ENCODE measurements at regions of chr11 and their contacts with region 1.

Region 1: GRCh38 chr11:20303343-20303965 is 60.1 kb upstream of the HTATIP2 start:
- DNase-seq: no peak
- H3K4me3 ChIP-seq: no peak overlapping the region
- H3K27ac ChIP-seq: no peak overlapping the region
- H3K27me3 ChIP-seq: no peaks in the 10 kb centered on the region
- CTCF ChIP-seq: no peak

Region 2: DNA sequence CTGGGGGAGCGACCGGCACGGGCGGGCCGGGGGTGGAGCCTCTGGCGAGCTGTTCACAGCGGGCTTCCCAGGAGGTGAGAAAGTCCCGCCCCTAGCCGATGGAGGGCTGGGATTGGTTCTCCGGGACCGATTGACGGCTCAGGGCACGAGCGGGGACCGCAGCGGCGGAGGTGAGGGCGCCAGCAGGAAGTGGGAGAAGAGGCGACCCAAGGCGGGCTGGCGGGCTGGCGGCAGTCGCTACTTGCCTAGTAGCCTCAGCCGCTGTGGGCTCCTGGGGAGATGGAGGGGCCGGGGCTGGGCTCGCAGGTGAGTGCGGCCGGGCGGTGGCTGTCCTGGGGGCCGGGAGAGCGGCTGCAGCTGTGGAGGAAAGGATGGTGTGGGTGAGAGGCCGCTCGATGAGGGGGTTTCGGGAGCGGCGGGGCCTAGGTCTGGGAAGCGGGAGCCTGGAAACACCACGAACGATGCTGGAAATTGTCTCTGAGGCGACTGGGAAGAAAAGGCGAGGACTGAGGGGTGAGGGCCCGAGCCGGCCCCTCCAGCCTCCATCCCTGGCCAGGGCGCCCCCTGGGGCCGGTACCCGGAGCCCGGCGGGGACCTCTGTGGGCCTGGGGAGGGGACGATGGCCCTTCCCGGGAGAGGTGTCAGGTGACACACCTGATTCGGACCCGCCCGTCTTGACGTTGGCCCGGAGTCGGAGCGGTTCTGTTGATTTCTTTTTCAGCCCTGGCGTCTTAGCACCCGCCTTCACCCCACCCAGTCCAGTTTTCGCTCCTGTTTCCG is 1186.3 kb before region 1 on chr11 and contains the start of gene ZDHHC13:
- CTCF ChIA-PET with region 1: no interaction called
- POLR2A ChIA-PET with region 1: interaction called, 11 read pairs
- DNase-seq: peak; percentile 70
- H3K4me3 ChIP-seq: peak within 1 kb of the TSS; percentile 80
- H3K27ac ChIP-seq: peak within 1 kb of the TSS; percentile 21
- H3K27me3 ChIP-seq: peaks cover 11% of the 10 kb centered on the region
- CTCF ChIP-seq: peak; percentile 55
- polyA plus RNA-seq, gene ZDHHC13: 10.5 and 15.4 TPM in 2 replicates

Region 3: GRCh38 chr11:20327377-20327935 is 24.0 kb after region 1 on chr11:
- CTCF ChIA-PET with region 1: no interaction called
- POLR2A ChIA-PET with region 1: no interaction called
- DNase-seq: no peak
- H3K4me3 ChIP-seq: no peak overlapping the region
- H3K27ac ChIP-seq: no peak overlapping the region
- H3K27me3 ChIP-seq: peaks cover 3% of the 10 kb centered on the region
- CTCF ChIP-seq: no peak

Region 4: DNA sequence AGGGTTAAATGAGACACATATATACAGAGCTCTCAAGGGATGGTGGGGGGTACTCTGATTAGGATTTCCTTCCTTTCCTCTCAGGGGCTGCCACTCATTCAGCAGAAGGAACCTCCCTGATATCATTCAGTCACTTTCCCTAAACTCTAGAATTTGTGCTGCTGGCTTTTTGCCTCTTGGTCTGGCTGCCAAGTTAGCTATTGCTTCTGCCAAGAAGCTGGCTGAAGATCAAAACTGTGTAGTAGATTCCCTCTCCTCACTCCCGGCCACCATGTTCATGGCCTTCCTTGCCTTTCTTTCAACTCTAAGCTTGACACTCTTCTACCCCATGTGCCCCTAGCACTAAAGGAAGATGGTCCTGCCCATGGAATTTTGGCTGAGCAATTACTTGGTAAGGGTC is 314.6 kb after region 1 on chr11:
- CTCF ChIA-PET with region 1: no interaction called
- POLR2A ChIA-PET with region 1: no interaction called
- DNase-seq: no peak
- H3K4me3 ChIP-seq: no peak overlapping the region
- H3K27ac ChIP-seq: no peak overlapping the region
- H3K27me3 ChIP-seq: no peaks in the 10 kb centered on the region
- CTCF ChIP-seq: no peak

Measured in AG04450 (cell line).